CD4-positive, alpha-beta T cell (primary cell): ENCODE measurements at regions of chr11 and their contacts with region 1.

Region 1: GRCh38 chr11:114159802-114160632 is 100.5 kb downstream of the ZBTB16 start:
- DNase-seq: peak; percentile 96 to 99 (median 98)
- ATAC-seq: peak; percentile 97
- H3K4me3 ChIP-seq: peak overlapping the region; percentile 21
- H3K4me3 Mint-ChIP-seq: peak overlapping the region; percentile 66
- H3K27ac ChIP-seq: peak overlapping the region in 1 of 2 donors; percentile 55
- H3K27ac Mint-ChIP-seq: peak overlapping the region; percentile 79
- H3K4me1 ChIP-seq: peaks cover 82% of the 10 kb centered on the region
- H3K4me1 Mint-ChIP-seq: peaks cover 86% of the 10 kb centered on the region
- H3K27me3 ChIP-seq: no peaks in the 10 kb centered on the region
- H3K27me3 Mint-ChIP-seq: no peaks in the 10 kb centered on the region
- CTCF ChIP-seq: no peak

Region 2: GRCh38 chr11:114059278-114059983 is 100.6 kb before region 1 on chr11 and contains the start of gene ZBTB16:
- CTCF ChIA-PET with region 1: no interaction called
- POLR2A ChIA-PET with region 1: interaction called, 12 read pairs
- intact Hi-C with region 1: loop called in 1 of 2 experiments (anchors 10 kb)
- DNase-seq: peak; percentile 34 to 84 (median 56)
- ATAC-seq: peak; percentile 73
- H3K4me3 ChIP-seq: peak within 1 kb of the TSS; percentile 67
- H3K4me3 Mint-ChIP-seq: peak within 1 kb of the TSS; percentile 95
- H3K27ac ChIP-seq: peak within 1 kb of the TSS in 1 of 2 donors; percentile 21
- H3K27ac Mint-ChIP-seq: peak within 1 kb of the TSS; percentile 64
- H3K4me1 ChIP-seq: peaks cover 33% of the 10 kb centered on the region
- H3K4me1 Mint-ChIP-seq: peaks cover 9% of the 10 kb centered on the region
- H3K27me3 ChIP-seq: peaks cover 25 to 28% of the 10 kb centered on the region in 2 experiments
- H3K27me3 Mint-ChIP-seq: peaks cover 51% of the 10 kb centered on the region
- CTCF ChIP-seq: peak; percentile 23
- total RNA-seq, gene ZBTB16: 19.1 to 20.6 TPM

Region 3: GRCh38 chr11:114180301-114181055 is 20.5 kb after region 1 on chr11:
- CTCF ChIA-PET with region 1: interaction called, 4 read pairs
- POLR2A ChIA-PET with region 1: interaction called, 49 read pairs
- intact Hi-C with region 1: loop called in 1 of 2 experiments (anchors 2 kb)
- DNase-seq: peak in 3 of 14 experiments; percentile 47 to 51 (median 50)
- ATAC-seq: no peak
- H3K4me3 ChIP-seq: no peak overlapping the region
- H3K4me3 Mint-ChIP-seq: peak overlapping the region; percentile 39
- H3K27ac ChIP-seq: no peak overlapping the region
- H3K27ac Mint-ChIP-seq: peak overlapping the region; percentile 91
- H3K4me1 ChIP-seq: peaks cover 71% of the 10 kb centered on the region
- H3K4me1 Mint-ChIP-seq: peaks cover 93% of the 10 kb centered on the region
- H3K27me3 ChIP-seq: no peaks in the 10 kb centered on the region
- H3K27me3 Mint-ChIP-seq: no peaks in the 10 kb centered on the region
- CTCF ChIP-seq: peak; percentile 19

Region 4: DNA sequence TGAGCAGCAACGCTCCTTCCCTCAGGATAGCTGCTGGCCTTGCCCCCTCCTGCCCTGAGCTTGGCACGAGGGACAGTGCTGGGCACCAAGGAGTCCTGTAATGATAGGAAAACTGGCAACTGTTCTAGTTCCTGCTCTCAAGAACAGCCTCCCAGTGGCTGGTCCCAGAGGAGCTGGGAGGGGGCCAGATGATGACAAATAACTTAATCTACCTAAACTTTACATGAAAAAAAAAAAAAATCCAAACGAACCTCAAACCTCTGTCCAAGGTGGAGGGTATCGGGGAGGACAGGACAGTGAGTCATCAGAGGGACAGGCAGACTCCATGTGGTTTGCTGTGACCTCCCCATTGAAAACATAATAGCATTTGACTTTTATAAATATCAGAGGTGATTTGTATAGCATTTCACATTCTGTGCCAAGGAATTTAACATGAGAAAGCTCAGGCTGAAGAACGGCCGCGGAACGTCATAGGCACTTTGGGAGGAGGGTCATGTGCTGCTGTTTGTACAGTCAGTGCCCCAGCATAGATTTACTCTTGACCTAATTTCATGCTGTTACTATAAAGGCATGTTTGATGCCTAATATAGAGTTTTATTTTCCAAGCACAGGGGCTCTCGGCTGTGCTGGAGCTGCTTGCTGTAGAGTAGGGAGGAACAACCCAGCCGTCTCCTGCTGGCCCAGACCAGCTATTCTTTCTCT is 37.9 kb after region 1 on chr11:
- CTCF ChIA-PET with region 1: interaction called, 3 read pairs
- POLR2A ChIA-PET with region 1: interaction called, 21 read pairs
- intact Hi-C with region 1: loop called in 1 of 2 experiments (anchors 5 kb)
- DNase-seq: no peak
- ATAC-seq: no peak
- H3K4me3 ChIP-seq: no peak overlapping the region
- H3K4me3 Mint-ChIP-seq: no peak overlapping the region
- H3K27ac ChIP-seq: no peak overlapping the region
- H3K27ac Mint-ChIP-seq: no peak overlapping the region
- H3K4me1 ChIP-seq: peaks cover 15% of the 10 kb centered on the region
- H3K4me1 Mint-ChIP-seq: peaks cover 38% of the 10 kb centered on the region
- H3K27me3 ChIP-seq: no peaks in the 10 kb centered on the region
- H3K27me3 Mint-ChIP-seq: no peaks in the 10 kb centered on the region
- CTCF ChIP-seq: no peak